WTC11 (cell line): ENCODE measurements at regions of chr1 and their contacts with region 1.

Region 1: DNA sequence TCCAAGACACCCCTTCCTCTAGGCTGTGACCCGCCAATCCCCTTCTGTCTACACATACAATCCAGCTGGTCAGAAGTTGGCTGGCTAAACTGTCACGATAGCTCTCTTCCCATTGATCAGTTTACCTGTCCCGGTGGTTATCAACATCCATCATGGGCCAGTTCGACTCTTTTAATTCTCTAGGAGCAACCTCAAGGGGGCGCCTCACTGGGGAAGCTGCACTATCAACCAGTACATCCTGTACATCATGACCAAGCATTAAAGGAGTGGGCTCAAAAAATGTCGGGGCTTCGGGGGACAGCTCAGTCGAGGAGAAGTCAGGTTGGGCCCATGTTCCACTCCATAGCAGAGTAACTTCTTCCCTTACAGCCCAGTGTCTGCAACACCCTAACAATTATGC is 53.2 kb upstream of the B3GALNT2 start:
- DNase-seq: peak; percentile 67
- ATAC-seq: peak; percentile 80
- H3K4me3 Mint-ChIP-seq: no peak overlapping the region
- H3K27ac Mint-ChIP-seq: no peak overlapping the region
- H3K4me1 Mint-ChIP-seq: no peaks in the 10 kb centered on the region
- H3K27me3 Mint-ChIP-seq: no peaks in the 10 kb centered on the region; the same call in 1 of the 2 replicates
- CTCF ChIP-seq: peak; percentile 57

Region 2: GRCh38 chr1:235105051-235106043 is 452.1 kb before region 1 on chr1:
- CTCF ChIA-PET with region 1: no interaction called
- POLR2A ChIA-PET with region 1: interaction called, 12 read pairs
- DNase-seq: no peak
- ATAC-seq: no peak
- H3K4me3 Mint-ChIP-seq: no peak overlapping the region
- H3K27ac Mint-ChIP-seq: 0 out of 2 replicates have a peak overlapping the region, but pooled peaks have one; percentile 29
- H3K4me1 Mint-ChIP-seq: peaks cover 13% of the 10 kb centered on the region
- H3K27me3 Mint-ChIP-seq: no peaks in the 10 kb centered on the region
- CTCF ChIP-seq: no peak

Region 3: GRCh38 chr1:235545277-235545930 is 12.1 kb before region 1 on chr1:
- CTCF ChIA-PET with region 1: interaction called, 20 read pairs
- POLR2A ChIA-PET with region 1: interaction called, 3 read pairs
- DNase-seq: no peak
- ATAC-seq: no peak
- H3K4me3 Mint-ChIP-seq: no peak overlapping the region
- H3K27ac Mint-ChIP-seq: no peak overlapping the region; the same call in 1 of the 2 replicates
- H3K4me1 Mint-ChIP-seq: peaks cover 21% of the 10 kb centered on the region
- H3K27me3 Mint-ChIP-seq: no peaks in the 10 kb centered on the region
- CTCF ChIP-seq: no peak

Region 4: DNA sequence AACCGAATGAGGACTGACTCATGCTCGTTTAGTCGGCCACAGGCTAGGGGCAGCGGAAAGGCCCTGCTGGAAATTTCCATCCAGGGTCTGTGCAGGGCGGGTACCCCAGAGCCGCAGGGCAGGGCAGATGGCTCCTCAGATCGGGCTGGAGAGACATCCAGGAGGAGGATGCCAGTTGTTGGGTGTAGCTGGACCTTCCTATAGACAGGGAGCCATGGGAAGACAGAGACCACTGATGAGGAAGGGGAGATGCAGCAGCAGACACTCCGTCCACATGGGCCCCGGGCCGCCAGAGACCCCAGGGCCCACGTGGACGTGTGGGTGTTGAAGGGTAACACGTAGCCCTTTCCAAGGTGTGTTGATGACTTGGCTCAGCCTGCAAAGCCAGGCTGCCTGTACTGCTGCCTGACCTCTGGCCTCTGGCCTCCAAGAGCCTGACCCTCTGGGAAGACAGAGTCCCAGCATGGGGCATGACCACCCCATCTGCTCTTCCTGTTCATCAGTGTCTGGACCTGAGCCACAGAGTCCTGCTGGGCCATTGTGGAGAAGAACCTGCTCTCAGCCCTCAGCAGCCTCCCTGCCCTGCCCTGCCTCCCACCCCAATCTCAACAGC is 87.3 kb after region 1 on chr1:
- CTCF ChIA-PET with region 1: no interaction called
- POLR2A ChIA-PET with region 1: no interaction called
- DNase-seq: no peak
- ATAC-seq: no peak
- H3K4me3 Mint-ChIP-seq: no peak overlapping the region
- H3K27ac Mint-ChIP-seq: no peak overlapping the region
- H3K4me1 Mint-ChIP-seq: peaks cover 71% of the 10 kb centered on the region
- H3K27me3 Mint-ChIP-seq: no peaks in the 10 kb centered on the region
- CTCF ChIP-seq: no peak